Activated CD8-positive, alpha-beta T cell treated with anti-CD3 and anti-CD28 coated beads, Interleukin-2, amount 10 ng/mL, durations not matched to agents 7 days and 5 days (primary cell): ENCODE measurements at regions of chr3 and their contacts with region 1.

Region 1: GRCh38 chr3:119498186-119498987 is at the start of gene TIMMDC1:
- DNase-seq: peak; percentile 98
- ATAC-seq: peak; percentile 99
- H3K4me3 Mint-ChIP-seq: peak within 1 kb of the TSS; percentile 99
- H3K27ac Mint-ChIP-seq: peak within 1 kb of the TSS; percentile 98
- H3K4me1 Mint-ChIP-seq: peaks cover 32% of the 10 kb centered on the region
- H3K27me3 Mint-ChIP-seq: no peaks in the 10 kb centered on the region
- total RNA-seq, gene TIMMDC1: 78.1 to 79.8 TPM

Region 2: DNA sequence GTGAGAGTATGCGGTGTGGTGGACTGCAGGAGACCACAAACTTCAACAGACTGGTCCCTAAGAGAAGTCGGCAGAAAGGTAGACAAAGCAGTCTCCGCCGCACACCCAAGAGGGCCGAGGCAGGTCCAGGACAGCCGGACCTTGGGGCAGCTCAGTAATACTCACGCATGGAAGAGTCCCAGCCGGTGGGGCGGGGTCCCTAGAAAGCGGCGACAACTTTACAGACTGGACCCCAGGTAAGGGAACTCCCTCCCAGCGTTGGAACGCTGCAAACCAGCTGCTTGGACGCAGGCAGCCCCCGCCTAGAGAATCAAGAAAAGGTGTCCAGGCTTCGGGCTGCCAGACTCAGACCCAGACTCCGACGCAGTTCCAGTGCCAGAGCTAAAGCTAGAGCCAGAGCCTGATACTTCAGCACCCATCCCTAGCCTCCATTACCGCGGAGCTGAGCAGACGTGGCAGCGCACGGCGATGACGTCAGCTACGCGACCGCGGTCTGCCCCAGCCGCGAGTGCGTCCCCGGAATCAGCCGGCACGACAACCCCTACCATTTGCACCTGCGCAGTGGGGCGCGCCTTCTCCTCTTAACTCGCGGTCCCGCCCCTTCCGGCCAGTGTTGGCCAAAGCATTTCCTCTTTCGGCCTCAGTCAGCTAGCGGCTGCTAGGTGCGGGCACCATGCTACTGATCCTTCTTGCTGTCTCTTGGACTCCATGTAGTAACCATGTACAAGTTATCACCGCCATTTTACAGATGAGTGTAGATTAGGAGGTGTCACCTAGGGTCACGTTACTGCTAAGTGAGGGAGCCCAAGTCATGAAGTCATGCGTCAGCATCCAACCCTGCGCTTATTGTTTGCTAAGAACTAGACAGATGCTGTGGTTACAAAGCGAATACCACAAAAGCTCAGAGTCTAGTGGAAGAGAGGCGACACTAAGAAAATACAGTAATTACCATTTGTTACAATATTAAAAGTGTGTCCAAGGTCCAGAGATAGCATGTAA is 34.9 kb before region 1 on chr3 and contains the start of gene TMEM39A:
- CTCF ChIA-PET with region 1: interaction called, 10 read pairs
- POLR2A ChIA-PET with region 1: interaction called, 42 read pairs
- DNase-seq: peak; percentile 99
- ATAC-seq: peak; percentile 92
- H3K4me3 Mint-ChIP-seq: peak within 1 kb of the TSS; percentile 97
- H3K27ac Mint-ChIP-seq: peak within 1 kb of the TSS; percentile 99
- H3K4me1 Mint-ChIP-seq: peaks cover 45% of the 10 kb centered on the region
- H3K27me3 Mint-ChIP-seq: no peaks in the 10 kb centered on the region
- total RNA-seq, gene TMEM39A: 30.5 to 31.2 TPM

Region 3: GRCh38 chr3:119469381-119470189 is 28.8 kb before region 1 on chr3:
- CTCF ChIA-PET with region 1: interaction called, 10 read pairs
- POLR2A ChIA-PET with region 1: interaction called, 28 read pairs
- DNase-seq: no peak
- ATAC-seq: peak; percentile 48
- H3K4me3 Mint-ChIP-seq: peak overlapping the region; percentile 97
- H3K27ac Mint-ChIP-seq: peak overlapping the region; percentile 94
- H3K4me1 Mint-ChIP-seq: peaks cover 33% of the 10 kb centered on the region
- H3K27me3 Mint-ChIP-seq: no peaks in the 10 kb centered on the region

Region 4: GRCh38 chr3:119559441-119559963 is 61.1 kb after region 1 on chr3 and contains the start of gene CD80:
- CTCF ChIA-PET with region 1: interaction called, 4 read pairs
- POLR2A ChIA-PET with region 1: interaction called, 30 read pairs
- DNase-seq: peak; percentile 90
- ATAC-seq: peak; percentile 88
- H3K4me3 Mint-ChIP-seq: peak within 1 kb of the TSS; percentile 78
- H3K27ac Mint-ChIP-seq: peak within 1 kb of the TSS; percentile 78
- H3K4me1 Mint-ChIP-seq: peaks cover 66% of the 10 kb centered on the region
- H3K27me3 Mint-ChIP-seq: no peaks in the 10 kb centered on the region
- total RNA-seq, gene CD80: 19.1 to 20.2 TPM